ENCODE measurements at regions of chr2 and their contacts with region 1.

Region 1: GRCh38 chr2:84022810-84023431 is 436.2 kb downstream of the SUCLG1 start:
- DNase-seq: peak; percentile 47 to 74
- H3K4me3 ChIP-seq: no peak overlapping the region
- H3K4me3 Mint-ChIP-seq: no peak overlapping the region
- H3K27ac Mint-ChIP-seq: no peak overlapping the region
- H3K4me1 ChIP-seq: no peaks in the 10 kb centered on the region
- H3K4me1 Mint-ChIP-seq: no peaks in the 10 kb centered on the region
- H3K27me3 ChIP-seq: no peaks in the 10 kb centered on the region
- H3K27me3 Mint-ChIP-seq: peaks cover 2% of the 10 kb centered on the region
- CTCF ChIP-seq: peak; percentile 68 to 85

Region 2: DNA sequence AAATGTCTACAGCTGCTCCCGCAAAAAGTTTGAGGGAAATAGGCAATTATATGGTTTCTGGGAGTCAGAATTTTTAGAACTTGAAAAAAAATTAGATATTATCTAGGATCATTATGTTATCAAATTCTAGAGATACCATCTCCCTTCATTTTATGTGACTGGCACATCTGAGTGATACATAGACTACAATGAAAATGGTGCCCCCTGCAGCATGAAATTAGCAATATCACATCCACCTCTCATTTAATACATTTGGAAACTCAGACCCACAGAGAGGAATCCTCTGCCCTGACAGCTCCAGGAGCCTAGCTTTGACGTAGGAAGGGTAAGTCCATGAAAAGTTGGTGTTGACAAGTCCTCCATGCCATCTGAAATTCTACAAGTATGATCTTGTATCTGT is 54.6 kb after region 1 on chr2:
- CTCF ChIA-PET with region 1: no interaction called
- POLR2A ChIA-PET with region 1: no interaction called
- intact Hi-C with region 1: loop called (anchors 5 kb)
- DNase-seq: peak in 1 of 2 experiments; percentile 35
- H3K4me3 ChIP-seq: no peak overlapping the region
- H3K4me3 Mint-ChIP-seq: no peak overlapping the region
- H3K27ac Mint-ChIP-seq: no peak overlapping the region
- H3K4me1 ChIP-seq: no peaks in the 10 kb centered on the region
- H3K4me1 Mint-ChIP-seq: no peaks in the 10 kb centered on the region
- H3K27me3 ChIP-seq: no peaks in the 10 kb centered on the region
- H3K27me3 Mint-ChIP-seq: no peaks in the 10 kb centered on the region
- CTCF ChIP-seq: peak; percentile 17 to 39

Region 3: GRCh38 chr2:84257831-84258230 is 234.9 kb after region 1 on chr2:
- CTCF ChIA-PET with region 1: interaction called, 22 read pairs
- POLR2A ChIA-PET with region 1: no interaction called
- intact Hi-C with region 1: loop called (anchors 1 kb)
- DNase-seq: peak in 1 of 2 experiments; percentile 34
- H3K4me3 ChIP-seq: no peak overlapping the region
- H3K4me3 Mint-ChIP-seq: no peak overlapping the region
- H3K27ac Mint-ChIP-seq: no peak overlapping the region
- H3K4me1 ChIP-seq: no peaks in the 10 kb centered on the region
- H3K4me1 Mint-ChIP-seq: no peaks in the 10 kb centered on the region
- H3K27me3 ChIP-seq: no peaks in the 10 kb centered on the region
- H3K27me3 Mint-ChIP-seq: no peaks in the 10 kb centered on the region
- CTCF ChIP-seq: peak in 1 of 2 experiments; percentile 53

Region 4: GRCh38 chr2:84302513-84303412 is 279.8 kb after region 1 on chr2:
- CTCF ChIA-PET with region 1: interaction called, 14 read pairs
- POLR2A ChIA-PET with region 1: no interaction called
- intact Hi-C with region 1: loop called (anchors 1 kb)
- DNase-seq: peak; percentile 66 to 69
- H3K4me3 ChIP-seq: no peak overlapping the region
- H3K4me3 Mint-ChIP-seq: no peak overlapping the region
- H3K27ac Mint-ChIP-seq: no peak overlapping the region
- H3K4me1 ChIP-seq: peaks cover 32% of the 10 kb centered on the region
- H3K4me1 Mint-ChIP-seq: peaks cover 42% of the 10 kb centered on the region
- H3K27me3 ChIP-seq: no peaks in the 10 kb centered on the region
- H3K27me3 Mint-ChIP-seq: no peaks in the 10 kb centered on the region
- CTCF ChIP-seq: peak; percentile 57 to 66

Region 5: DNA sequence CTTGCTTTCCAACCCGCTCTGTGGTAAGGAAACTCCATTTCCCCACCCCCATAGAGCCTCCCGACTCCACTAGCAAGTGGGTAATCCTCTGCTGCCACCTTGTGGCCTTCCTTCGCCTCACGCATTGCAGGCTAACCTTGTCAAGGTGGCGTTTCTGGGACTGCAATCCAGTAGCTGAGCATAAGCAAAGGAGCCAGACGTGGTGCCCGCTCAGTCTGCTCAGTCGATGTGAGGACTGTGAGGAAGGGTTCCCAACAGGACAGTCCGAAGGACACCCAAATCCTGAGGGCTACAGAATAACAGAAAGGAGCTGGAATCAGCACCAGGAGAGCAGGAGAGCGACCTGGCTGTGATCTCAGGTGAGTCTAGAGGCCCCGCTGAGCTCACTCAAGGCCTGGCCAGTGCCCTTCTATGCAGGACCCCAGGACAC is 292.0 kb after region 1 on chr2:
- CTCF ChIA-PET with region 1: interaction called, 25 read pairs
- POLR2A ChIA-PET with region 1: no interaction called
- intact Hi-C with region 1: loop called (anchors 1 kb)
- DNase-seq: peak; percentile 88 to 91
- H3K4me3 ChIP-seq: no peak overlapping the region
- H3K4me3 Mint-ChIP-seq: no peak overlapping the region
- H3K27ac Mint-ChIP-seq: no peak overlapping the region
- H3K4me1 ChIP-seq: no peaks in the 10 kb centered on the region
- H3K4me1 Mint-ChIP-seq: peaks cover 7% of the 10 kb centered on the region
- H3K27me3 ChIP-seq: no peaks in the 10 kb centered on the region; the same call in 1 of the 2 replicates
- H3K27me3 Mint-ChIP-seq: no peaks in the 10 kb centered on the region
- CTCF ChIP-seq: peak; percentile 95 to 97

Region 6: DNA sequence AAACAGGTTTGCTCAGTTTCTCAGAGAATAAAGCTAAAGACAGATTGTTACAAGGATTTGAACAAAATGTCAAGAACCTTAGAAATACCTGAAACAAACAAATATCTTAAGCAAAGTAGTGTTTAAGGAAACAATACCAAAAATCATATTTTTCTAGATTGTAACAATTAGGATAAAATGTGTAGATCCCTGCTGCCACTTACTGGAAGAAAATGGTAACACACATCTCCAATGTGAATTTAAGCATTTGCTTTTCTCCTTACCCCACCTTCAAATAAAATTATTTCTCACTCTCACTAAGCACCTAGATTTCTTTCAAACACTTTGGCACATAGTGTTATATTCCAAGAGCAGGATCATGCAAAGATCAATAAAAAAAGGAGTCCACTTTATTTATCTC is 401.2 kb after region 1 on chr2:
- CTCF ChIA-PET with region 1: no interaction called
- POLR2A ChIA-PET with region 1: no interaction called
- intact Hi-C with region 1: loop called (anchors 1 kb)
- DNase-seq: no peak
- H3K4me3 ChIP-seq: no peak overlapping the region
- H3K4me3 Mint-ChIP-seq: no peak overlapping the region
- H3K27ac Mint-ChIP-seq: no peak overlapping the region
- H3K4me1 ChIP-seq: no peaks in the 10 kb centered on the region
- H3K4me1 Mint-ChIP-seq: no peaks in the 10 kb centered on the region
- H3K27me3 ChIP-seq: no peaks in the 10 kb centered on the region
- H3K27me3 Mint-ChIP-seq: no peaks in the 10 kb centered on the region
- CTCF ChIP-seq: peak; percentile 41 to 43

Region 7: GRCh38 chr2:84817239-84817655 is 794.3 kb after region 1 on chr2:
- CTCF ChIA-PET with region 1: no interaction called
- POLR2A ChIA-PET with region 1: no interaction called
- intact Hi-C with region 1: no loop called
- DNase-seq: no peak
- H3K4me3 ChIP-seq: no peak overlapping the region
- H3K4me3 Mint-ChIP-seq: no peak overlapping the region
- H3K27ac Mint-ChIP-seq: no peak overlapping the region
- H3K4me1 ChIP-seq: no peaks in the 10 kb centered on the region
- H3K4me1 Mint-ChIP-seq: no peaks in the 10 kb centered on the region
- H3K27me3 ChIP-seq: no peaks in the 10 kb centered on the region
- H3K27me3 Mint-ChIP-seq: peaks cover 19% of the 10 kb centered on the region
- CTCF ChIP-seq: no peak

Measured in Caco-2 (cell line).